WTC11 (cell line): ENCODE measurements at regions of chr3 and their contacts with region 1.

Region 1: GRCh38 chr3:62335196-62335595 is 38.2 kb downstream of the FEZF2 start:
- DNase-seq: no peak
- ATAC-seq: no peak
- H3K4me3 Mint-ChIP-seq: no peak overlapping the region
- H3K27ac Mint-ChIP-seq: no peak overlapping the region
- H3K4me1 Mint-ChIP-seq: peaks cover 29% of the 10 kb centered on the region
- H3K27me3 Mint-ChIP-seq: no peaks in the 10 kb centered on the region
- CTCF ChIP-seq: no peak

Region 2: GRCh38 chr3:62293051-62293780 is 42.0 kb before region 1 on chr3:
- CTCF ChIA-PET with region 1: no interaction called
- POLR2A ChIA-PET with region 1: no interaction called
- DNase-seq: no peak
- ATAC-seq: no peak
- H3K4me3 Mint-ChIP-seq: no peak overlapping the region
- H3K27ac Mint-ChIP-seq: no peak overlapping the region
- H3K4me1 Mint-ChIP-seq: no peaks in the 10 kb centered on the region
- H3K27me3 Mint-ChIP-seq: no peaks in the 10 kb centered on the region
- CTCF ChIP-seq: no peak

Region 3: DNA sequence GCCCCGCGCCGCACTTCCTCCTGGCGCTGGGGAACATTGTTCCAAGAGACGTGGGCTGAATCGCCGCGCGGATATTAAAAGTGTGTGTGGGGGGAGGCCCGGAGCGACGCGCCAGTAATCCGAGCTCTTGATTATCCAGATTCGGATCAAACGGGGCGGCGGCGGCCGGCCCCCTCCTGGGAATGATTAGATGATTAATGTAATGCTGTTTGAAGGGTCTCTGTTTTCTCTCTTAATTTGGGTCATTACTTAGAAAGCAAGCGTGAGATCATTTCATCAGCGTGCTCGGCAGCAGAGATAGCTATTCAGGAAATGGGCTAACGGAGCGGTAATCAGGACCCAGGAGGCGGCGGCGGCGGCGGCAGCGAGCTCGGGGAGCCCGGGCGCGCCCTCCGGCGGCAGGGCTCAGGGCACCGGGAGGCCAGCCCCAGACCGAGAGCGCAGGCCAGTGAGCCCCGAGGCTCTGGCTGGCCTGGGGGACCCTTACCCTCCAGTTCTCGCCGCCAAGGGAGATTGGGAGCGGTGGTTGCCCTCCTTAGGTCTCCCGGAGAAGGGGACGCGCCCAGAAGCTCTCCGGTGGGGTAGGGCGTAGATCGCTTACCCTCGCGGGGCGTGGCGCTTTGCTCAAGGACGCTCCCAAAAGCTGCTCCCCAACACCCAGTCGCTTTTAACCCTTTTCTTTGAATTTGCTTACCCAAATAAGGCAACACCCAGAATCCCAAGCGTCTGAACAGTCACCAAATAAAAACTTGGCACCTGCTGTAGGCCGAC is 33.7 kb after region 1 on chr3:
- CTCF ChIA-PET with region 1: interaction called, 17 read pairs
- POLR2A ChIA-PET with region 1: no interaction called
- DNase-seq: peak; percentile 77
- ATAC-seq: peak; percentile 43
- H3K4me3 Mint-ChIP-seq: peak overlapping the region; percentile 71
- H3K27ac Mint-ChIP-seq: no peak overlapping the region
- H3K4me1 Mint-ChIP-seq: peaks cover 78% of the 10 kb centered on the region
- H3K27me3 Mint-ChIP-seq: peaks cover 100% of the 10 kb centered on the region
- CTCF ChIP-seq: no peak